Activated naive CD4-positive, alpha-beta T cell treated with anti-CD3 and anti-CD28 coated beads for 36 hours (primary cell): ENCODE measurements at regions of chr14 and their contacts with region 1.

Region 1: DNA sequence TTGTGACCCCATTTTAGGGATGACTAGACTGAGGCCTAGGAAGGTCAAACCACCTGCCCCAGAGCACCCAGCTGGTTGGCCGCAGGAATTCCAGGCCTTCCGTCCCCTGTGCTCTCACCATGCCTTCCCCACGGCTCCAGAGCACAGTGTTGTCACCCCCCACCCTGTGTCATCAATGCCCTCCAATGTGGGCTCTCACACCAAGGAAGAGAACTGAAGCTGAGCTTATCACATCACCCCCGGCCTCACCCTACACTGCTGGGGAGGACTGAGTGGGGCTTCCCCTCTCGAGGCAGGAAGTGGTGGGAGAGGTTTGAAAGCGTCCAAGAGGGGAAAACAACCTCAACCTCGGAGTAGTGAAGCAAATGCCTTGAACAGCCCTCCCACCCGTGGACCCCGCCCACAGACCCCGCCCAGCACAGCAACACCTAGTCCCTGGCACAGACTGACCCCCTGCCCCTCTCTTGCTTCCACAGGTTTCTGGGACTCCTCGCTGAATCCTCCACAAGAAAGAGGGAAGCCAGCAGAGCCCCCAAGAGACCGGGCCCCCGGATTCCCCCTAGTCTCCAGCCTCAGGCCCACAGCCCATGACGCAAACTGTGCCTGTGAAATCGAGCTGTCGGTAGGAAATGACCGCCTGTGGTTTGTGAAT is 97.2 kb downstream of the LGMN start:
- DNase-seq: peak; percentile 93
- H3K4me3 Mint-ChIP-seq: peak overlapping the region; percentile 93
- H3K27ac Mint-ChIP-seq: peak overlapping the region; percentile 97
- H3K4me1 Mint-ChIP-seq: peaks cover 76% of the 10 kb centered on the region
- H3K27me3 Mint-ChIP-seq: no peaks in the 10 kb centered on the region

Region 2: GRCh38 chr14:91872517-91873470 is 778.4 kb before region 1 on chr14:
- CTCF ChIA-PET with region 1: no interaction called
- intact Hi-C with region 1: loop called (anchors 5 kb)
- DNase-seq: peak; percentile 53
- H3K4me3 Mint-ChIP-seq: peak overlapping the region; percentile 57
- H3K27ac Mint-ChIP-seq: peak overlapping the region; percentile 74
- H3K4me1 Mint-ChIP-seq: peaks cover 87% of the 10 kb centered on the region
- H3K27me3 Mint-ChIP-seq: no peaks in the 10 kb centered on the region

Region 3: GRCh38 chr14:92121670-92122350 is 529.4 kb before region 1 on chr14 and contains the starts of genes CPSF2 and NDUFB1:
- CTCF ChIA-PET with region 1: no interaction called
- intact Hi-C with region 1: loop called (anchors 5 kb)
- DNase-seq: peak; percentile 90
- H3K4me3 Mint-ChIP-seq: peak within 1 kb of the TSS; percentile 99
- H3K27ac Mint-ChIP-seq: peak within 1 kb of the TSS; percentile 100
- H3K4me1 Mint-ChIP-seq: peaks cover 41% of the 10 kb centered on the region
- H3K27me3 Mint-ChIP-seq: no peaks in the 10 kb centered on the region
- total RNA-seq, gene CPSF2: 103 to 115 TPM
- total RNA-seq, gene NDUFB1: 111 to 114 TPM

Region 4: DNA sequence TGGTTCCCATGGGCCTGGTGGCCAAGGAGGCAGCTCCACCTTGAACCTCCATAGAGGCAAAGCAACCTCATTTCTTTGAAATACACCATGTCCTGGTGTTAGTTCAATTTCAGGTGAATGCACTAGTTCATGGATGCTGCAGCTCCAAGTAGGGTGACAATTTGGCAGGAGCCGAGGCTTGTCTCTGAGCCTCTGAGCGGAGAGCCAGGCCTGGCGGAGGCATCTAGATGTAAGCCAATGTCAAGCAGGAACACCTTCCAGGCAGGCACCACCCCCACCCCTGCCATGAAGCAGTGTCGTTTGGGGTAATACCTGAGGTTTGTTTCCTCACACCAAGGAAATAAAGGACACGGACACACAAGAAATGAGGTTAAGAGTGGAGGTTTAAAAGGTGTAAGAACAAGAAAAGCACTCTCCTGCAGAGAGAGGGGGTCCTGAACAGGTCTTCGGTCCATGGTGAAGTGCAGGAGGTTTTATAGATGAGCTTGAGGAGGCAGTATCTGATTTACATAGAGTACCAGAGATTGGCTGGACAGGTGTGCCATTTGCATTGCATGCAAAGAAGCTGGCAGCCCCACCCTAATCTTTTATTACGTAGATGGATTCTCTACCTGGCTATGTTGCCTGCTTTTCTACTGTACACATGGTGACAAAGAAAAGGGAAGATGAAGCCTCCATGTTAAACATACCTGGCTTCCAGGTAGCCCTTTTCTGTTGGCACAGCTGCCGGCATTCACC is 77.3 kb before region 1 on chr14:
- CTCF ChIA-PET with region 1: no interaction called
- intact Hi-C with region 1: no loop called
- DNase-seq: no peak
- H3K4me3 Mint-ChIP-seq: no peak overlapping the region
- H3K27ac Mint-ChIP-seq: no peak overlapping the region
- H3K4me1 Mint-ChIP-seq: peaks cover 43% of the 10 kb centered on the region
- H3K27me3 Mint-ChIP-seq: no peaks in the 10 kb centered on the region

Region 5: GRCh38 chr14:92585981-92586937 is 65.0 kb before region 1 on chr14:
- CTCF ChIA-PET with region 1: no interaction called
- intact Hi-C with region 1: loop called (anchors 2 kb)
- DNase-seq: peak; percentile 59
- H3K4me3 Mint-ChIP-seq: peak overlapping the region; percentile 2
- H3K27ac Mint-ChIP-seq: peak overlapping the region; percentile 65
- H3K4me1 Mint-ChIP-seq: peaks cover 82% of the 10 kb centered on the region
- H3K27me3 Mint-ChIP-seq: no peaks in the 10 kb centered on the region

Region 6: GRCh38 chr14:92668276-92668973 is 17.2 kb after region 1 on chr14:
- CTCF ChIA-PET with region 1: interaction called, 14 read pairs
- intact Hi-C with region 1: loop called (anchors 1 kb)
- DNase-seq: no peak
- H3K4me3 Mint-ChIP-seq: no peak overlapping the region
- H3K27ac Mint-ChIP-seq: peak overlapping the region; percentile 79
- H3K4me1 Mint-ChIP-seq: peaks cover 77% of the 10 kb centered on the region
- H3K27me3 Mint-ChIP-seq: no peaks in the 10 kb centered on the region